PC-9 (cell line): ENCODE measurements at regions of chr6 and their contacts with region 1.

Region 1: GRCh38 chr6:158104696-158105095 is 63.4 kb downstream of the SERAC1 start:
- DNase-seq: no peak
- H3K4me3 ChIP-seq: no peak overlapping the region
- H3K27ac ChIP-seq: no peak overlapping the region
- H3K4me1 ChIP-seq: no peaks in the 10 kb centered on the region
- H3K27me3 ChIP-seq: no peaks in the 10 kb centered on the region
- CTCF ChIP-seq: no peak

Region 2: GRCh38 chr6:157428427-157429202 is 676.1 kb before region 1 on chr6:
- CTCF ChIA-PET with region 1: no interaction called
- POLR2A ChIA-PET with region 1: no interaction called
- intact Hi-C with region 1: no loop called
- DNase-seq: peak; percentile 28 to 87
- H3K4me3 ChIP-seq: no peak overlapping the region
- H3K27ac ChIP-seq: peak overlapping the region; percentile 49
- H3K4me1 ChIP-seq: peaks cover 31% of the 10 kb centered on the region
- H3K27me3 ChIP-seq: no peaks in the 10 kb centered on the region
- CTCF ChIP-seq: no peak

Region 3: DNA sequence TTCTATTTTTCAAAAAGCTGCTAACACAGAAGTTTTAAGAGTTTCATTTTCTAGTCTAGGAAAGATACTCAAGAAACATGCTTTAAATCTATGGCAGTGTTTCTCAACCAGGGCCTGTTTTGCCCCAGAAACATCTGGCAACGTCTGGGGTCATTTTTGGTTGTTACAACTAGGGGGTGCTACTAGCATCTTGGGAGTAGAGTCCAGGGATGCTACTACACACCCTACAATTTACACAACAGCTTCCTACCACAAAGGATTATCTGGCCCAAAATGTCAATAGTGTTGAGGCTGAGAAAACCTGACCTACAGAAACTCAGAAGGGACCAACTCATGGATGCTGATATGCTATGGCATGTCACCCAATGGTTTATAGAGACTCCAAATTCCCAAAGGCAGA is 39.0 kb after region 1 on chr6:
- CTCF ChIA-PET with region 1: no interaction called
- POLR2A ChIA-PET with region 1: interaction called, 16 read pairs
- intact Hi-C with region 1: no loop called
- DNase-seq: no peak
- H3K4me3 ChIP-seq: no peak overlapping the region
- H3K27ac ChIP-seq: no peak overlapping the region
- H3K4me1 ChIP-seq: no peaks in the 10 kb centered on the region
- H3K27me3 ChIP-seq: no peaks in the 10 kb centered on the region
- CTCF ChIP-seq: peak; percentile 38; the same call in 1 of the 2 replicates

Region 4: DNA sequence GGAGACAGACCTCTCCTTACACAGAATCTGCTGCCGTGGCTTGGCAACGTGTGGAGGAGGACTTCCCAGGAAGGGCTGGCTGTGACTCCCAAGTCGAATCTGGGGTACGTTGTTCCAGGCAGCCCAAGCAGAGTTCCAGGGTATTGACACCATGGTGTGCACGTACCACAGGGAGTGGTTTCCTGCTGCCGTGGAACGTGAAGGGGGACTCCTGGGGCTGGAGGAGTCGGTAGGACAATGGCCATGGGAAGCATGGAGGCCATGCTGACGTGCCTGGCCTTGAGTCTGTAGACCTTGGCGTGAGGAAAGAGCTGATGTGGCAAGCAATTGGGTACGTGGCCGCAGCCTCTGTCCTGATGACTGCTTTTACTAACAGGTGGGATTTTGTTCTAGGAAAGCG is 326.9 kb after region 1 on chr6:
- CTCF ChIA-PET with region 1: no interaction called
- POLR2A ChIA-PET with region 1: no interaction called
- intact Hi-C with region 1: no loop called
- DNase-seq: no peak
- H3K4me3 ChIP-seq: no peak overlapping the region
- H3K27ac ChIP-seq: no peak overlapping the region
- H3K4me1 ChIP-seq: no peaks in the 10 kb centered on the region
- H3K27me3 ChIP-seq: no peaks in the 10 kb centered on the region
- CTCF ChIP-seq: no peak

Region 5: DNA sequence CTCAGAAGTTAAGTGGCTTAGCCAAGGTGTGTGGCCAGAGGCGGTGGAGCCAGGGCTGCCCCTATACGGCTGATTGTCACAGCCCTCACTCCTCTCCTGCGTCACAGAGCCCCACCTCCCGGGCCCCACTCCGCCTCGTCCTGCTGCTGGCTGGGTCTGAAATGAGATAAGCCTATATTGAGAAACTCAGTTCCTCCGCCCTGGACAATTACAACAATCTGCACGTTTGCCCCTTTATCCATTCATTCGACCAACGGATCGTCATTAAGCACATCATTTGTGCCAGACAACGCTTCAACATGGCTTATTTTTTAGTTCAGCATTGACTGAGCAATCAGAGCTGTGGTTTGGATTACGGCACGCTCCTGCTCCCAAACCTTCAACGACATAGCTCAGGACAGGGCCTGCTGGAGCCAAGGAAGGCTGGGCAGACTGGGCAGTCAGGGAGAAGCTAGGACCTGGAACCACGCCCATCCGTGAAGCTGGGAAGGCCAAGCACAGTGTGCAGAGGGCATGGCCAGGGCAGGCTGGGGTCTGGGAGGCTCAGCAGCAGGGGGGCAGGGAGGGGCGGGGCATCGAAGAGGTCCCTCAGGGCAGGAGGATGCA is 731.0 kb after region 1 on chr6:
- CTCF ChIA-PET with region 1: no interaction called
- POLR2A ChIA-PET with region 1: no interaction called
- intact Hi-C with region 1: no loop called
- DNase-seq: peak; percentile 80 to 94
- H3K4me3 ChIP-seq: peak overlapping the region; percentile 54
- H3K27ac ChIP-seq: peak overlapping the region; percentile 87
- H3K4me1 ChIP-seq: peaks cover 56% of the 10 kb centered on the region
- H3K27me3 ChIP-seq: no peaks in the 10 kb centered on the region
- CTCF ChIP-seq: no peak